ENCODE measurements at regions of chr6 and their contacts with region 1.

Region 1: DNA sequence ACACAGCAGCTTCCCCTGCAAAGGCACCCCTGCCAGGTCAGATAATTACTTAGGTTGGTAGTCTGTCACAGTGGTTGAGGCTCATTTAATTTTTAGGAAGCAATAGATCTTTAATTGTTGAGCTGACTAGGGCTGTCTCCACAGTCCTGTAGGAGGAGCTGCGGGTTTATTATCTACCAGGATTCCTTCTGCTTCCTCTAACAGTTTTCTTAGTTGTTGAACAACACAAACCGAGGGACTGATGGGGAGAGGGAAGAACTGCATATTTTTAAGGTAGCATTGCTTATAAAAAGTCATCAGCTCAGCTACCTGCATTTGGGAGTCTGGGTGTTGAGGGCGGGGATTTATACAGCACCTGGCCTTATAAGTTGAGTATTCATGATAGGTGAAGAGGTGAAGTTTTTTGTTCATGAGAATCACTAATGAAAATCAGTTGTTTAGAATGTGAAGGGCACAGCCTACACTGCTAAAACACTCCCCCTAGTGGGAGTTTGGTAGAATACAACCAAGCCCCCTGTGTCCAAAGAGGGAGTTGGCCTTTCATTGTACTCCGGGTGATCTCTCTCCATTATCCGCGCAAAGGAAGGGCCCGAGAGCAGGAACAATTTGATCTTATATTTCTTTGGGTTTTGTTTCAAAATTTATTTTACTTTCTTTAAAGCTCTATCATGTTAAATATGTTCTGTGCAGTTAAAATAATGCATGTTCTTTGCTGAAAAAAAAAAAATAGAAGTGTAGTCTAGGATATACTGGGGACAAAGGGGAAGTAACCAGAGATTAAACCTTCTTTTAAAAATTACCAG is 69.6 kb downstream of the SSR1 start:
- DNase-seq: peak in 1 of 6 donors; percentile 65
- ATAC-seq: peak in 3 of 4 donors; percentile 40 to 62 (median 48)
- H3K4me3 ChIP-seq: no peak overlapping the region
- H3K27ac ChIP-seq: peak overlapping the region in 3 of 4 donors; percentile 62 to 93 (median 88)
- H3K4me1 ChIP-seq: peaks cover 45 to 55% (median 48%) of the 10 kb centered on the region in 3 donors
- H3K27me3 ChIP-seq: no peaks in the 10 kb centered on the region
- CTCF ChIP-seq: peak; percentile 73 to 88 (median 86)

Region 2: DNA sequence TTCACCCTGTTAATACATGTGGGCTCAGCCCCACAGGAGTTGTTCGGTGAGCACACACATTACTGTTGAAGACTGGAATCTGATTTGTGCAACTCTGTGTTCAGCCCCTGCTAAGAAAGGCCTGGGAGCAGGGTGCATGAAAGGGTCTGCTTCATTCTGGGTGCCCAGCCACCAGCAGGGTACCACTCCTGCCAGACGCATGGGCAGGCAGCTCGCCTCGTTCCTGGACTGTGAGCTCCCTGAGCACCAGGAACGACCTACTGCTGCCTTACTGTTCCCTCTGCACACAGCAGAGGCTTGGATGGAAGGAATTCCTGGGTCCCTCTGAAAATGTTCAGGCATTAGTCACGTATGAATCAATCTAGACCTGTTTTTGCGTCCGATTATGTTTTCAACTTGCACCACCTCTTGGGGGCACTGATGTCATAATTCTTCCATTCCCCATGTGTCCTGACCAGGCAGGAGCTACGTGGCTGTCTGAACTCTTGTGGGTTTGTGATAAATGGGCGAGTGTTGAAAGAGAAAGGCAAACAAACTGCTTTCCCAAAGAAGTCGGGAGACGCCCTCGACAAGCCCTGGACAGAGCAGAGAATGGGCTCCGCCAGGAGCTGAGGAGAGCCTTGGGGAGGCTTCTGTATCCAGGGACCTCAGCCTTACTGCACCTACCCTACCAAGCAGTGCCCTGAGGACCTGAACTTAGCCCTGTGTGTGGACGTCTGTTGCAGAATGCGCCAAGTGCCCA is 531.0 kb before region 1 on chr6:
- intact Hi-C with region 1: loop called in 1 of 3 experiments (anchors 10 kb)
- DNase-seq: peak in 5 of 6 donors; percentile 43 to 72 (median 66)
- ATAC-seq: peak; percentile 83 to 94 (median 94)
- H3K4me3 ChIP-seq: no peak overlapping the region
- H3K27ac ChIP-seq: peak overlapping the region in 3 of 4 donors; percentile 63 to 84 (median 81)
- H3K4me1 ChIP-seq: peaks cover 0 to 6% (median 3%) of the 10 kb centered on the region in 3 donors
- H3K27me3 ChIP-seq: no peaks in the 10 kb centered on the region
- CTCF ChIP-seq: no peak

Region 3: DNA sequence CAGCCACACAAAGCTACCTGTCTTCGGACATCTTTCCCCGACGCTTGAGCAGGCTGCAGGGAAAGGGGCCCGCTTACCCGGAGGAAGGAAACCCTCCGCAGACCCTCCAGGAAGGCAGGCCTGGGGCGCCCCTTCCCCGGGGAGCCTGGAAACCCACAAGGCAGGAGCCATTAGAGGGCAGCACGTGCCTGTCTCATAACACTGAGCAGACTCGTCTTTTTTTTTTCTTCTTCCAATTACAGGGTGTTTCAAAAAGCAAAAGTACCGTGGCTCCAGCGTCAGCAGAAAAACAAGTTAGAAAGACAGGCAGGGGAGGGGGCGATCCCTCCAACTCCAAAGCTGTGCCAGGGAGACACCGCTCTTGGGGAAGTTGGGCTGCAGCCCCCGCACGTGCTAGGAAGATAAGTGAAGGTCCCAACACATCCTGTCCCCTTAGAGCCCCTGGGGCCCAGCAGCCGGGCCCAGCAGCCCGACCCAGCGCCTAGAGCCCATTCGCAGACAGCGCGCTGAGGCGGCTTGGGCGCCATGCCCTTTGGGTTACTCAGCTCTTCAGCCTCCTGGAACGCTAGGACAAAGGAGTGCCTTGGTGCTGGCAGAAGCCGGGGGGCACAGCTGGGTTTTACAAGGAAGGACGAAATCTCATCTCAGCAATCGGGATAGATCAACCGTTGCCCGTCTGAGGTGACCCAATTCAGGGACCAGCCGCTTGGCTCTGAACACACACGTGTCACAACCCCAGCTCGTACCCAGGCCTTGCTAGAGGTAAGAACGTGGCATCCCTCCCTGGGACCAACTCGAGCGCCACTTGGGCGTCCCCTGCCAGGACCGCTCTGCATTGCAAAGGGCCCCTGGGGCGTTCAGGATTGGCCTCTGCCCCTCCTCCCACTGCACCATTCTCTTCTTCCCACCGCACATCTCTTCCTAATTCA is 518.6 kb before region 1 on chr6:
- intact Hi-C with region 1: loop called in 1 of 3 experiments (anchors 5 kb)
- DNase-seq: peak in 5 of 6 donors; percentile 63 to 76 (median 72)
- ATAC-seq: peak; percentile 89 to 93 (median 92)
- H3K4me3 ChIP-seq: peak overlapping the region in 2 of 4 donors; percentile 30 to 33
- H3K27ac ChIP-seq: peak overlapping the region; percentile 65 to 87 (median 74)
- H3K4me1 ChIP-seq: peaks cover 20 to 26% (median 22%) of the 10 kb centered on the region in 3 donors
- H3K27me3 ChIP-seq: no peaks in the 10 kb centered on the region
- CTCF ChIP-seq: peak in 3 of 4 donors; percentile 31 to 52 (median 52)

Measured in pancreas (tissue), 10 donors.